ENCODE measurements at regions of chr16 and their contacts with region 1.

Region 1: GRCh38 chr16:4517812-4518680 is 20.5 kb downstream of the CDIP1 start:
- DNase-seq: peak; percentile 38
- H3K4me3 Mint-ChIP-seq: no peak overlapping the region
- H3K27ac Mint-ChIP-seq: no peak overlapping the region
- H3K4me1 Mint-ChIP-seq: no peaks in the 10 kb centered on the region
- H3K27me3 Mint-ChIP-seq: no peaks in the 10 kb centered on the region
- CTCF ChIP-seq: peak; percentile 73

Region 2: DNA sequence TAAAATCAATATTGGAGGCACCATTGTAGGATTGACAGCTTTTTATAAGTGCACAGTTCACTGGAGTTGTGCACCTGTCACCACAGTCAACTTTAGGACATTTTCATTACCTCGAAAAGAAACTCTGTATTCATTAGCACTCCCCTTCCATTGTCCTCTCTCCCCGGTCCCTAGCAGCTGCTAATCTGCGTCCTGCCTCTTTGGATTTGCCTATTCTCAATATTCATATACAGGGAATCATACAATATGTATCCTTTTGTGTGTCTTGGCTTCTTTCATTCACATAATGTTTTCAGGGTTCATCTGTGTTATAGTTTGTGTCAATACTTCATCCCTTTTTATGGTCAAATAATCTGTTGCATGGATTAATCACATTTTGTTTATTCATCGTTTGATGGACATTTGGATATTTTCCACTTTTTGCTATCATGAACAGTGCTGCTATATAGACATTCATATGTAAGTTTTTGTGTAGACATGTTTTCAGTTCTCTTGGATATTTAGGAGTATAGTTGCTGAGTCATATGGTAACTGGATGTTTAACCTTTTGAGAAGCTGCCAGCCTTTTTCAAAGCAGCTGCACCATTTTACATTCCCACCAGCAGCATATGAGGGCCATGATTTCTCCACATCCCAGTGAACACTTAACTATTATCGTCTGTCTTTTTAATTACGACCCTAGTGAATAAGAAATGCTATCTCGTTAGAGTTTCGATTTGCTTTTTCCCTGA is 82.5 kb before region 1 on chr16:
- CTCF ChIA-PET with region 1: no interaction called
- POLR2A ChIA-PET with region 1: no interaction called
- intact Hi-C with region 1: no loop called
- DNase-seq: no peak
- H3K4me3 Mint-ChIP-seq: no peak overlapping the region
- H3K27ac Mint-ChIP-seq: peak overlapping the region; percentile 11
- H3K4me1 Mint-ChIP-seq: peaks cover 14% of the 10 kb centered on the region
- H3K27me3 Mint-ChIP-seq: no peaks in the 10 kb centered on the region
- CTCF ChIP-seq: no peak

Region 3: GRCh38 chr16:4580245-4580644 is 62.2 kb after region 1 on chr16:
- CTCF ChIA-PET with region 1: interaction called, 7 read pairs
- POLR2A ChIA-PET with region 1: no interaction called
- intact Hi-C with region 1: loop called (anchors 1 kb)
- DNase-seq: peak; percentile 55
- H3K4me3 Mint-ChIP-seq: no peak overlapping the region
- H3K27ac Mint-ChIP-seq: peak overlapping the region; percentile 88
- H3K4me1 Mint-ChIP-seq: peaks cover 11% of the 10 kb centered on the region
- H3K27me3 Mint-ChIP-seq: no peaks in the 10 kb centered on the region
- CTCF ChIP-seq: no peak